Activated B cell treated with CpG ODN at 0.5 μM for 24 hours (primary cell): ENCODE measurements at regions of chr3 and their contacts with region 1.

Region 1: DNA sequence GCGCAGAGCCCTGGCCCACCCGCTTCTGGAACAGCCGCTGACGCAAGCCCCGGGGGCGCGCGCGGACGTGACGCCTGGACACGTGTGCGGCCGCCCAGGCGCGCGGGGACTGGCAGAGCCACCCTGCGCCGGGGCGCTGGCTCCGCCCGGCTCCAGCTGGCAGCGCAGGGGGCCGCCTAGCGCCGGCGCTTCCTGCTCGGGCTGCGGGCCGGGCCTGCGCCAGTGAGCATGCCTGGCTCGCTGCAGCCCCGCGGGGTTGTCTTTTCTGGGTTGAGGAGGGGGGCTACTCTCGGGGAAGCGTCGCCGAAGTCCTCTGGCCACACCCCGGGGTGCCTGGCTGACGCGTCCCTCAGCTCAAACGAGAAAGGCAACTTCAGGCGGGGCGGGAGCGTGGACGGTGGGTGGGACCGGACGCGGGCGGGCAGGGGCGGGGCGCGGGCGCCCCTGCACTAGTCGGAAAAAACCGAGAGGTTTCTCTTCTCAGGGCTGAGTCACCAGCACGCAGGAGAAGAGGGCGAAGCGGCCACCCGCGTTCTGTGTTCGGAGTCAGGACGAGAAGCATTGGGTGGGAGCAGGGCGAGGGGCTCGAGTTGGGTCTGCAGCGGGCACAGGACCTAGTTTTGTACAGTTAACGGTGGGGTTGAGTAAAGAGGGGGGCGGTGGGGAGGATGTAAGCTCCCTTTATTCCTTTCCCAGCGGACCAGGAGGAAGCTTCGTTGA is at the start of gene SIAH2:
- DNase-seq: peak; percentile 94
- ATAC-seq: peak; percentile 74
- H3K4me3 Mint-ChIP-seq: peak within 1 kb of the TSS; percentile 99
- H3K27ac Mint-ChIP-seq: peak within 1 kb of the TSS; percentile 100
- H3K4me1 Mint-ChIP-seq: peaks cover 77% of the 10 kb centered on the region
- H3K27me3 Mint-ChIP-seq: no peaks in the 10 kb centered on the region
- CTCF ChIP-seq: no peak
- total RNA-seq, gene SIAH2: 44.5 and 44.7 TPM in 2 replicates

Region 2: DNA sequence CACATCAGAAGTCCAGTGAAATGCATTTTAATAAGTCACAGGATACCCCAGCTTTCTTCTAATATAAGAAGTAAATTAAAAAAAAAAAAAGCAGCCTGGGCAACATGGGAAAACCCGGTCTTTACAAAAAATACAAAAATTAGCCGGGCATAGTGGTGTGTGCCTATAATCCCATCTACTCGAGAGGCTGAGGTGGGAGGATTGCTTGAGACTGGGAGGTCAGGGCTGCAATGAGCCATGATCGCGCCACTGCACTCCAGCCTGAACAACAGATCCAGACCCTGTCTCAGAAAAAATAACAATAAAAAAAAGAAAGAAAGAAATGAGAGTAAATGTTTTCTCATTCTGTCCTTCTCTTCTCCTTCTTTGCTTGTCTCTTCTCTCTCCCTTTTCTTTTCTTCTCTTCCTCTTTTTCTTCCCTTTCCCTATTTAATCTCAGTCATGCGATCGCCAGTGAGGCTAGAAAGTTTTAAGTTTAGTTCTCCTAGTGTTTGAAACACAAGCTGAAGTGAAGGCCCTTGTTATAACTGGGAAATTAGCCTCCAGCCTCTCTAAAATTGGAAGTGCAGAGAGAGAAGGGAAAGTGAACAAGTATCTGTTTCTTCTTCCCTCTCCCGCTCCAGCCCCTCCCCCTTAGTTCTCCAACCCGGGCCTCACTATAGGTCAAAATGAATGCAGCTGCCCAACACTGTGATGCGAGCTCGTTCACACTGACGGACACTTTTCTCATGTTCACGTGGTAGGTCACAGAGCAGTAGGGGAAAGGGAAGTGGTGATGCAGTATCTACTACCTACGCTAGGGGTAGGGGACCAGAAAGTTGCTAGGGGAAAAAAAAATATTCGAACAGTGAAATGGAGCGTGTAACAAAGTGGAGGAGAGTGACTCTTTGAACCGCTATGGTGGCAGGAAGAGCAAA is 378.7 kb before region 1 on chr3:
- CTCF ChIA-PET with region 1: no interaction called
- POLR2A ChIA-PET with region 1: interaction called, 4 read pairs
- intact Hi-C with region 1: loop called (anchors 2 kb)
- DNase-seq: peak; percentile 47
- ATAC-seq: peak; percentile 95
- H3K4me3 Mint-ChIP-seq: peak overlapping the region; percentile 84
- H3K27ac Mint-ChIP-seq: peak overlapping the region; percentile 98
- H3K4me1 Mint-ChIP-seq: peaks cover 42% of the 10 kb centered on the region
- H3K27me3 Mint-ChIP-seq: no peaks in the 10 kb centered on the region
- CTCF ChIP-seq: no peak

Region 3: GRCh38 chr3:150613709-150614480 is 149.4 kb before region 1 on chr3:
- CTCF ChIA-PET with region 1: no interaction called
- POLR2A ChIA-PET with region 1: interaction called, 11 read pairs
- intact Hi-C with region 1: no loop called
- DNase-seq: no peak
- ATAC-seq: no peak
- H3K4me3 Mint-ChIP-seq: no peak overlapping the region
- H3K27ac Mint-ChIP-seq: no peak overlapping the region
- H3K4me1 Mint-ChIP-seq: peaks cover 59% of the 10 kb centered on the region
- H3K27me3 Mint-ChIP-seq: no peaks in the 10 kb centered on the region
- CTCF ChIP-seq: no peak

Region 4: DNA sequence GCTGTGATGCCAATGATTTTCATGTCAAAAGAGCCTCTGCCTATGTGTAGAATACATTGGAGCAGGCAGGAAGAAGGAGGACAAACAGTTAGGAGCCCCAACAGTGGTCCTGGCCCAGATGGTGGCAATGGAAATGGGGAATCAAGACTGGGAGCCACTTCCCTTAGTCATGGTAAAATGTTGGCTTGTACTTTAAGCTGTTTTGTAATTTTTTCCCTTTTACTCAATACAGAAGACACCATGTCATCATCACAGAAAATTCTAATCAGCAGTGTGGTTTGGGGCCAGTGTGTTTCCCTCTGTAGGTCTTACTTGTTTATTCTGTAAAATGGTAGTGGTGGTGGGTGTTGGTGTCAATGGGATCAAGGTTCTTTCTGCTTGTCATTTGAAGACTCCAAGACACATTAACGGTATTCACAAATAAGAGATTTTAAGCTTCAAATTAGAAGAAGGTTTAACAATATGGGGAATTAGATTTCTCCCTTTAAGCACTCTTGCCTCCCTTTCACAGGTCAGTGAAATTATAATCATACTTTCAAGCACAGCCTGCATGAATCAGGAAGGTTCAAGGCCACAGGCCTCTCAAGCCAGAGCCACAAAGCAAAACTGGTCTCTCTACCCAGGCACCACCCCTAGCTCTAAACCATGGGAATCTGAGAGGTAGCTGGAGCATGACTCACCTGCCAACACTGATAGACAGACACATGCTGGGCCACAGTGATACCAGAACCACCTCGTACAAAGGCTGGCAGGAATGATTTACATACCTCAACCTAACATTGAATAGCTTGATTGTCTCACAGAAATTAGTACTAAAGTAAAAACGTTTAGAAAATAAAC is 25.2 kb before region 1 on chr3:
- CTCF ChIA-PET with region 1: interaction called, 7 read pairs
- POLR2A ChIA-PET with region 1: interaction called, 65 read pairs
- intact Hi-C with region 1: loop called (anchors 1 kb)
- DNase-seq: no peak
- ATAC-seq: peak; percentile 11
- H3K4me3 Mint-ChIP-seq: peak overlapping the region; percentile 36
- H3K27ac Mint-ChIP-seq: peak overlapping the region; percentile 83
- H3K4me1 Mint-ChIP-seq: peaks cover 65% of the 10 kb centered on the region
- H3K27me3 Mint-ChIP-seq: no peaks in the 10 kb centered on the region
- CTCF ChIP-seq: no peak

Region 5: DNA sequence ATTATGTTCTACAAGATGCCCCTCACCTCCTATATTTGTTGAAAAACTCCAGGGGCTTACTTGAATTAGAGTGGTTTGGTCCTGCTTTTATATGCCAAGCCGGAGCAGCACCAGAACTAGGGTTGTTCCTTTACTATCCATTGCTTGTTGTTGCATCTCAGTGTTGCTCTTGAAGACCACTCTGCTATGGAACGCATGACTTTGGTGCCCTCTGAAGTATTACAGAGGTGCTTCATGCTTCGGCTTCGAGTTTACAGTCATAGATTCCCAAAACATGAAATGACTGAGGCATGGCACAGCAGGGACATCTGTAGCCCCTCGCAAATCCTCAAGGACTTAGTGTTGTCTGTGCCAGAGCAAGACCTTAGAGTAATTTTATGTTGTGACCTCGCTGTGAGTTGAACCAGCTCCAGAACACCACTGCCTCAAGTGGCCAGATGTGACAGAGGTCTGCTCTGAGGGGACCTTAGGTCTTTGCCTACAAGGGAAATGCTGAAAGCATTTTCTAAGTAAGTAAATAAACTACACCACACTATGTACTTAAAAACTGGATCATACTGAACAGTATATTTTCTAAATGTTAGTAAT is 66.9 kb after region 1 on chr3:
- CTCF ChIA-PET with region 1: no interaction called
- POLR2A ChIA-PET with region 1: no interaction called
- intact Hi-C with region 1: loop called (anchors 1 kb)
- DNase-seq: no peak
- ATAC-seq: peak; percentile 60
- H3K4me3 Mint-ChIP-seq: no peak overlapping the region
- H3K27ac Mint-ChIP-seq: no peak overlapping the region
- H3K4me1 Mint-ChIP-seq: peaks cover 6% of the 10 kb centered on the region
- H3K27me3 Mint-ChIP-seq: peaks cover 4% of the 10 kb centered on the region
- CTCF ChIP-seq: no peak

Region 6: DNA sequence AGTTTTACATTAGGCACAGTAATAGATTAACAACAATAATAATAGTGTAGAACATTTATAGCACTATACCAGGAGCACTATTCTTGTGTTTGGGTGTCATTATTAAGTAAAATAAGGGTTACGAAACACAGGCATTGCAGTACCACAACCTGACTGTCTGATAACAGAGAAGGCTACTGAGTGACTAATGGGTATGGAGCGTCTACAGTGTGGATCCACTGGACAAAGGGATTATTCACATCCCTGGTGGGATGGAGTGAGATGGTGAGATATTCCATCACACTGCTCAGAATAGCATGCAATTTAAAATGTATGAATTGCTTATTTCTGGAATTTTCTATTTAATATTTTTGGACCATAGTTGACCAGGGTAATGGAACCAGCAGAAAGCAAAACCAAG is 123.7 kb after region 1 on chr3:
- CTCF ChIA-PET with region 1: no interaction called
- POLR2A ChIA-PET with region 1: no interaction called
- intact Hi-C with region 1: no loop called
- DNase-seq: no peak
- ATAC-seq: no peak
- H3K4me3 Mint-ChIP-seq: no peak overlapping the region
- H3K27ac Mint-ChIP-seq: no peak overlapping the region
- H3K4me1 Mint-ChIP-seq: no peaks in the 10 kb centered on the region
- H3K27me3 Mint-ChIP-seq: peaks cover 9% of the 10 kb centered on the region
- CTCF ChIP-seq: no peak

Region 7: DNA sequence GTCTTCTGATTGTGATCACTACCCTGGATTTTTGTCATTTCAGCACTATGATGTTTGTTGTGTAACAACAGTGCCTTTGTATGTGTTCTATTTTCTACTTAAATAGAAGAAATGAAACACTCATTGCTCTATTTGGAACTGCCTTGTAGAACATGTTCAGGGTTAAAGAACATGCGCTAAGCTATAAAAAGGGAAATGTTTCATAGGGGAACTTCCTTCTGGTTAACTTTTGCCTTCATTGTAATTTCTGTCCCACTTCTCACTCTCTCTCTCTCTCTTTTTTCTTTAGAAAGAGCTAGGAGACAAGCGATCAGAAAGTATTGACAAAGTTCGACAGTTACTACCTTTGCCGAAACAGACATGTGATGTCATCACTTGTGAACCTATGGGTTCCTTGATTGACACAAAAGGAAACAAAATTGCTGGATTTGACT is 621.5 kb after region 1 on chr3 and contains the start of gene P2RY12:
- CTCF ChIA-PET with region 1: no interaction called
- POLR2A ChIA-PET with region 1: interaction called, 5 read pairs
- intact Hi-C with region 1: loop called (anchors 5 kb)
- DNase-seq: no peak
- ATAC-seq: peak; percentile 29
- H3K4me3 Mint-ChIP-seq: peak within 1 kb of the TSS; percentile 79
- H3K27ac Mint-ChIP-seq: peak within 1 kb of the TSS; percentile 97
- H3K4me1 Mint-ChIP-seq: peaks cover 76% of the 10 kb centered on the region
- H3K27me3 Mint-ChIP-seq: no peaks in the 10 kb centered on the region
- CTCF ChIP-seq: no peak
- total RNA-seq, gene P2RY12: 0.58 and 0.64 TPM in 2 replicates